ENCODE measurements at regions of chr20 and their contacts with region 1.

Region 1: GRCh38 chr20:47501483-47502270 is at the start of gene NCOA3:
- DNase-seq: peak; percentile 97 to 98
- ATAC-seq: peak; percentile 97
- H3K4me3 ChIP-seq: peak within 1 kb of the TSS; percentile 86 to 96
- H3K27ac ChIP-seq: peak within 1 kb of the TSS; percentile 32 to 88
- H3K4me1 ChIP-seq: no peaks in the 10 kb centered on the region
- H3K27me3 ChIP-seq: no peaks in the 10 kb centered on the region
- total RNA-seq, gene NCOA3: 42.6 to 53.7 TPM

Region 2: GRCh38 chr20:47334022-47334551 is 167.6 kb before region 1 on chr20:
- intact Hi-C with region 1: no loop called
- DNase-seq: no peak
- ATAC-seq: peak; percentile 55
- H3K4me3 ChIP-seq: no peak overlapping the region
- H3K27ac ChIP-seq: peak overlapping the region; percentile 14 to 23
- H3K4me1 ChIP-seq: peaks cover 4 to 8% of the 10 kb centered on the region in 2 donors
- H3K27me3 ChIP-seq: no peaks in the 10 kb centered on the region

Region 3: GRCh38 chr20:47379433-47380150 is 122.1 kb before region 1 on chr20:
- intact Hi-C with region 1: loop called in 1 of 2 experiments (anchors 5 kb)
- DNase-seq: no peak
- ATAC-seq: no peak
- H3K4me3 ChIP-seq: no peak overlapping the region
- H3K27ac ChIP-seq: no peak overlapping the region
- H3K4me1 ChIP-seq: no peaks in the 10 kb centered on the region
- H3K27me3 ChIP-seq: no peaks in the 10 kb centered on the region

Region 4: DNA sequence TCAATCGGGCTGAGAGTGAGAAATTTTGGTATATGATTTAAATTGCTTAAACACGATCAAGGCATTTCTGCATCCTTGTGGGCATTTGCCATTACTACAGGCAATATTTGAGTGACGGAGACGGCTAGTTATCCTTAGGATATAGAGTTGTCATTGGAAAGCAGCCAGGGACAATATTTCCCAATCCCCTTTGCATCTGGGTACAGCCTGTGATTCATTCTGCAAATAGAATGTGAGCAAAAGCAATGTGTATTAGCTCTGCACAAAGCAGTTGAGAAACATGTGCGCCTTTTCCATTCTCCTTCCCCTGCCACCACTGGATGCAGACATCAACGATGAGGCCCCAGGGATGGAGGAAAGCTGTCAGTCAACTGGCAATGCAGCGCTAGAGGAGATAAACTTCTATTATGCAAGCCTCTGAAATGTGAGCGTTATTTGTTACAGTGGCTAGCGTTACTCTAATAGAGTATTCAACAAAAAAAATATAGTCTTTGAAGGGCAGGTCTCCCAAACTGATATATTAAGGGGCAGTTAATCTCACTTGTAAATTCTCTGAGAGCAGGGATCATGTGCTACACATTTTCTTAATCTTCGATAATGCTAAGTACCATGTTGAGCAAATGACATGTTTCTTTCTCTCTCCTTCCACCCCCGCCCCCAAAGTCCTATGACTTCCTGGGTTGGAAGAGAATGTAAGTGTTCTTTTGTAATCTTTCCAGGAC is 37.1 kb before region 1 on chr20:
- intact Hi-C with region 1: loop called (anchors 5 kb)
- DNase-seq: peak in 1 of 2 donors; percentile 57
- ATAC-seq: peak; percentile 89
- H3K4me3 ChIP-seq: no peak overlapping the region
- H3K27ac ChIP-seq: peak overlapping the region; percentile 54 to 98
- H3K4me1 ChIP-seq: no peaks in the 10 kb centered on the region
- H3K27me3 ChIP-seq: no peaks in the 10 kb centered on the region

Region 5: DNA sequence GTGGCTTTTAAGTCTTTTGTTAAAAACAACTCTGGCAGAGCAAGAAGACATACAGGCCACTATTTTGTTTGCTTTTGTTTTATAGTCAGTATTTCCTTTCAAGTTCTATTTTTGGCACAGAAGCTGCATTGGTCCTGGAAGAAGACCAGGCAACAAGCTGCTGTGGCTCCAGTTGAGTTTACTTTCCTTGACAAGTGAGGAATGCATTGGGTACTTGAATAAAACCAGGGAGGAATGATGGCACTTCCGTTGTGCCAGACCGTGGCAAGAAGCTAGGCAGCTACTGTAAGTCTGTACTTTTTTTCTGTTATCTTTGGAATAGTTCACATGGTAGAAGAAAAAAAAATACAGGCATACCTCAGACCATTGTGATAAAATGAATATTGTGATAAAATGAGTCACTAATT is 66.3 kb after region 1 on chr20:
- intact Hi-C with region 1: loop called (anchors 5 to 10 kb)
- DNase-seq: peak in 1 of 2 donors; percentile 66
- ATAC-seq: peak; percentile 19
- H3K4me3 ChIP-seq: no peak overlapping the region
- H3K27ac ChIP-seq: peak overlapping the region in 1 of 2 donors; percentile 33
- H3K4me1 ChIP-seq: peaks cover 0 to 2% of the 10 kb centered on the region in 2 donors
- H3K27me3 ChIP-seq: no peaks in the 10 kb centered on the region

Region 6: GRCh38 chr20:47610247-47610944 is 108.7 kb after region 1 on chr20:
- intact Hi-C with region 1: loop called in 1 of 2 experiments (anchors 10 kb)
- DNase-seq: peak in 1 of 2 donors; percentile 74
- ATAC-seq: peak; percentile 83
- H3K4me3 ChIP-seq: no peak overlapping the region
- H3K27ac ChIP-seq: peak overlapping the region in 1 of 2 donors; percentile 11
- H3K4me1 ChIP-seq: peaks cover 0 to 1% of the 10 kb centered on the region in 2 donors
- H3K27me3 ChIP-seq: no peaks in the 10 kb centered on the region

Measured in aorta (tissue), 5 donors.